B cell (primary cell): ENCODE measurements at regions of chr20 and their contacts with region 1.

Region 1: DNA sequence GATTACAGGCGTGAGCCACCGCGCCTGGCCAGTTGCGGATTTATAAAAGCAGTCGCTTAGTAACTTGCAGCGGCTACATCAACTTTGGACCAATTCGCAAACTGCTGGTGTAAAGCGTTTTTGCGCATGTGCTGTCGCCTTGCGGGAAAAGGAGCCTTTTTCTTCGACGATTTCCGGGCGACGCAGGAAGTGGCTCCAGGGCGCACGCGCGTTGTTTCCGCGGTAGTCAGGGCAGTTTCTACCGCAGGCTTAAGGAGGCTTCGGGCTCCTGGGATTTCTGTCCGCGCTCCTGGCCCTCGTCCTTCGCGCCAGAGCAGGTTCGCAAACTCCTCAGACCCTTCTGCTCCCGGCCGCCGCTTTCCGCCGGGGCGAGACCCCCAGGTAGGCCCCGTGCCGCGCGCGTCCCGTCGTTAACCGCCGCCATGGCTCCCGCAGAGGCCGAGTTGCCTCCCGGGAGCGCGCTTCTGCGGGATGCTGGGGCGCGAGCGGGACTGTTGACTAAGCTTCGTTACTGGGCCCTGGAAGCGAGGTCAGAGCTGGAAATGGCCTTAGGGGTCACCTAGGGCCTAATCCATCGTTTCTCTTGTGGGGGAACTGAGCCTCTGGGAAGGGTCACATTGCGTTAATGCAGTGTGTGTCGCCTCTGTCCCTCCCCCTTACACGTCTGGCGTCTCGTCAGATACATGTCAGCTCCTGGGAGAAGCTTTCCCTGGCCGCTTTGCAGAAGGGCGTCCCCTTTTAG is at the start of gene RAE1:
- DNase-seq: peak; percentile 94
- ATAC-seq: peak; percentile 84
- H3K4me3 ChIP-seq: peak within 1 kb of the TSS; percentile 68 to 99 (median 89)
- H3K4me3 Mint-ChIP-seq: peak within 1 kb of the TSS; percentile 92
- H3K27ac ChIP-seq: peak within 1 kb of the TSS; percentile 58 to 81
- H3K27ac Mint-ChIP-seq: peak within 1 kb of the TSS; percentile 92
- H3K4me1 ChIP-seq: peaks cover 9 to 18% of the 10 kb centered on the region in 2 donors
- H3K4me1 Mint-ChIP-seq: peaks cover 22% of the 10 kb centered on the region
- H3K27me3 ChIP-seq: no peaks in the 10 kb centered on the region
- H3K27me3 Mint-ChIP-seq: no peaks in the 10 kb centered on the region
- CTCF ChIP-seq: no peak
- total RNA-seq, gene RAE1: 32.6 and 36.4 TPM in 2 replicates

Region 2: DNA sequence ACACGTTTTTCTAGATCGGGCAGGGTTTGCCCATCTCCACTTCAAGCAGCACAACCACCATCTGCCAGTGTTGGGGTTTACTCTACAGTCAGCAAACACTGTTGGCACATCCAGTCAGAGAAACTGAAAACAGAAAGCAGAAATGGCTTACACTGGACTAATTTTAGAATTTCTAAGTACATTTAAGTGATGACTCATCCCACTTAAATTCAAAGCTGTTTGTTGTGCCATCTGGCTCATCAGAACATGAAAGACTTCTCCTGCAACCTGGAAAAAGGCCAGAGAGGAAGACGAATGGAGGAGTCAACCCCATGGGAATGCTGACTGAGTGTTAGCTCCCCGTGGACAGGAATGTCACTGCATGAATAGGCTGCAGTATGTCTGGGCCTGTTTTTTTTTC is 796.3 kb before region 1 on chr20:
- CTCF ChIA-PET with region 1: interaction called, 17 read pairs
- POLR2A ChIA-PET with region 1: no interaction called
- intact Hi-C with region 1: no loop called
- DNase-seq: no peak
- ATAC-seq: peak; percentile 31
- H3K4me3 ChIP-seq: no peak overlapping the region
- H3K4me3 Mint-ChIP-seq: no peak overlapping the region
- H3K27ac ChIP-seq: no peak overlapping the region
- H3K27ac Mint-ChIP-seq: no peak overlapping the region
- H3K4me1 ChIP-seq: peaks cover 0 to 6% of the 10 kb centered on the region in 2 donors
- H3K4me1 Mint-ChIP-seq: peaks cover 8% of the 10 kb centered on the region
- H3K27me3 ChIP-seq: no peaks in the 10 kb centered on the region
- H3K27me3 Mint-ChIP-seq: no peaks in the 10 kb centered on the region
- CTCF ChIP-seq: no peak

Region 3: DNA sequence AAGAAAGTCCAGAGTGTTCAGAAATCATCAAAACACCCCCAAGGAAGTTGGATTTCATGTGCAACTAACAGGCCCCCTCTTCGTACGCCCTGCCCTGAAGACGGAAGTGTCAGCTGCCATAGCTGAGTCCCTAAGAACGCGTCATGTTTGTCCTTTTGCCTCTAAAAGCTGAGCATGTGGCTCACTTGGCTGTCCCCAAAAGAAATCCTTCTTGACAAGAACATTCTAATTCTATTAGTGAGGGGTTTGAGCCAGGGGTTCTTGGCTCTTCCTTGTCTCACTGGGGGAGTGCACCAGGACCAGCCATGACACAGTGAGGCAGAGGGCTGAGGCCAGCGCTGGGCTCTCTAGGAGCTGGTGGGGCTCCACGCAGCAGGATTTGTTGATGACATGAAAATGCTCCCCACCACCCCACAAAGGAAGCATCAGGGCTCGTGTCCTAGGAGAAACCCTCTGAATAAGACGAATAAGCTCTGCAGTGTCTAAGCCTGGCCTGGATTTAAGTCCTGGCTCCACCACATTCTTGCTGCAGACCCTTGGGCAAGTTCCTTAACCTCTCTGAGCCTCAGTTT is 41.6 kb before region 1 on chr20:
- CTCF ChIA-PET with region 1: no interaction called
- POLR2A ChIA-PET with region 1: no interaction called
- intact Hi-C with region 1: no loop called
- DNase-seq: no peak
- ATAC-seq: no peak
- H3K4me3 ChIP-seq: no peak overlapping the region
- H3K4me3 Mint-ChIP-seq: no peak overlapping the region
- H3K27ac ChIP-seq: no peak overlapping the region
- H3K27ac Mint-ChIP-seq: no peak overlapping the region
- H3K4me1 ChIP-seq: no peaks in the 10 kb centered on the region
- H3K4me1 Mint-ChIP-seq: no peaks in the 10 kb centered on the region
- H3K27me3 ChIP-seq: peaks cover 0 to 7% (median 2%) of the 10 kb centered on the region in 4 experiments
- H3K27me3 Mint-ChIP-seq: peaks cover 10% of the 10 kb centered on the region
- CTCF ChIP-seq: no peak

Region 4: DNA sequence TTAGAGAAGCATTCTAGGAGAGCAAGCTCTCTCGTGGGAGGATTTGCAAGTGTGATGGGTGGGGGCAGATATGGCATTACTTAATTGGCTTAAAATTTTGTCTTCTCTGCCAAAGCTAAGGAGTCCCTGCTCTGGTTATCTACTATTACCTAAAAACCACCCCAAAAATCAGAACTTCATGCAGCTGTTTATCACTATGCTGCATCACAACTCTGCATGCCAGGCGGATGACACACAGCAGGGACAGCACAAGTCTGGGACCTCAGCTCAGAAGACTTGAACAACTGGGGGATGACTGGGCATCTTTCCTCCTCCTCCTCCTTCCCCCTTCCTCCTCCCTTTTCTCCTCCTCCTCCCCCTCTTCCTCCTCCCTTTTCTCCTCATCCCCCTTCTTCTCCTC is 577.0 kb after region 1 on chr20:
- CTCF ChIA-PET with region 1: no interaction called
- POLR2A ChIA-PET with region 1: no interaction called
- intact Hi-C with region 1: no loop called
- DNase-seq: no peak
- ATAC-seq: no peak
- H3K4me3 ChIP-seq: no peak overlapping the region
- H3K4me3 Mint-ChIP-seq: no peak overlapping the region
- H3K27ac ChIP-seq: no peak overlapping the region
- H3K27ac Mint-ChIP-seq: no peak overlapping the region
- H3K4me1 ChIP-seq: no peaks in the 10 kb centered on the region
- H3K4me1 Mint-ChIP-seq: no peaks in the 10 kb centered on the region
- H3K27me3 ChIP-seq: peaks cover 0 to 12% (median 3%) of the 10 kb centered on the region in 4 experiments
- H3K27me3 Mint-ChIP-seq: peaks cover 37% of the 10 kb centered on the region
- CTCF ChIP-seq: no peak